ENCODE measurements at regions of chr14 and their contacts with region 1.

Region 1: GRCh38 chr14:24160850-24161804 is at the start of gene IRF9:
- DNase-seq: peak; percentile 97
- H3K4me3 ChIP-seq: peak within 1 kb of the TSS; percentile 37 to 79 (median 67)
- H3K27ac ChIP-seq: peak within 1 kb of the TSS; percentile 78
- H3K4me1 ChIP-seq: peaks cover 16% of the 10 kb centered on the region
- H3K27me3 ChIP-seq: no peaks in the 10 kb centered on the region
- CTCF ChIP-seq: peak; percentile 95 to 97
- POLR2A ChIP-seq: peak; percentile 88
- total RNA-seq, gene IRF9: 33.2 and 46.1 TPM in 2 replicates

Region 2: GRCh38 chr14:24013654-24014514 is 147.2 kb before region 1 on chr14:
- CTCF ChIA-PET with region 1: no interaction called
- POLR2A ChIA-PET with region 1: no interaction called
- dilution Hi-C with region 1: no loop called
- intact Hi-C with region 1: loop called (anchors 2 kb)
- DNase-seq: peak; percentile 82
- H3K4me3 ChIP-seq: no peak overlapping the region
- H3K27ac ChIP-seq: no peak overlapping the region
- H3K4me1 ChIP-seq: peaks cover 3% of the 10 kb centered on the region
- H3K27me3 ChIP-seq: peaks cover 0 to 2% of the 10 kb centered on the region in 2 experiments
- CTCF ChIP-seq: peak; percentile 64 to 72
- POLR2A ChIP-seq: no peak

Region 3: DNA sequence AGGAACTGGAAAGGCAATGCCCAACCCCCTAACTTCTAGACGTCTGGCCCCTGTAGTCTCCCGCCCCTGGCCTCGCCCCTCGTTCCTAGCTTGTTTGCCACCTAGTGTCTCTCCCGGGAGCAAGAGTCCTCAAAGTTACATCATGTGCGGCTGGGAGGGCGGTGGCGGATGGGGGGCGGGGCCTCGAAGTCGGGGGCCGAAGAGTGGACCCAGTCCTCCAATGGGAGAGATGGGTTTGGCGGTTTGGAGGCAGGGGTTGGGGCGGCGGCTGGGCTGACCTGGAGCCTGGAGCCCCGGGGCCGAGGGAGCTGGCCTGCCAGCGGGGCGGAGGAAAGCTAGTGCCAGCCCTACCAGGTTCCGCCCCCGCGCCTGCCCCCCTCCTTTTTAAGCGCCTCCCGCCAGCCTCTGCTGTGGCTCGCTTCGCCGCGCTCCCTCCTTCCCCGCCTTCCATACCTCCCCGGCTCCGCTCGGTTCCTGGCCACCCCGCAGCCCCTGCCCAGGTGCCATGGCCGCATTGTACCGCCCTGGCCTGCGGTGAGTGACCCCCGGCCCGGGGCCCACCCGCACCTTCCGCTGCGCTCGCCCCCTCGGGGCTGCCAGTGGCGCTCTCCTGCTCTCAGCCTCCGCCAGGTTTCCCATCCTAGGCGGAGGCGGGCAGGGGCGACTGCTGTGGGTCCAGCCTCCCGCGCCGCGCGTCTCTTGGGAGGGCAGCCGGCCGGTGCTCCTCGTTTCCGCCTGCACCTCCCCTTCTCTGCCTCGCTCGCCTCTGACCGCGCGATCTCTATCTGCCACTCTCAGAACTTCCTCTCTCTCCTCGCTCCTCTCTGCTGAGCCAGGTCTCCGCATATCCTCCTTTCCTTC is 67.0 kb before region 1 on chr14 and contains the start of gene PCK2:
- CTCF ChIA-PET with region 1: interaction called, 5 read pairs
- POLR2A ChIA-PET with region 1: no interaction called
- dilution Hi-C with region 1: no loop called
- intact Hi-C with region 1: loop called (anchors 1 kb)
- DNase-seq: peak; percentile 72
- H3K4me3 ChIP-seq: peak within 1 kb of the TSS; percentile 71 to 82 (median 74)
- H3K27ac ChIP-seq: peak within 1 kb of the TSS; percentile 46
- H3K4me1 ChIP-seq: peaks cover 9% of the 10 kb centered on the region
- H3K27me3 ChIP-seq: no peaks in the 10 kb centered on the region
- CTCF ChIP-seq: peak in 1 of 2 donors; percentile 9
- POLR2A ChIP-seq: peak; percentile 77
- total RNA-seq, gene PCK2: 24.5 and 25.1 TPM in 2 replicates

Region 4: GRCh38 chr14:24135834-24136542 is 25.1 kb before region 1 on chr14 and contains the start of gene PSME1:
- CTCF ChIA-PET with region 1: interaction called, 15 read pairs
- POLR2A ChIA-PET with region 1: interaction called, 3 read pairs
- dilution Hi-C with region 1: no loop called
- intact Hi-C with region 1: loop called (anchors 1 kb)
- DNase-seq: peak; percentile 92
- H3K4me3 ChIP-seq: peak within 1 kb of the TSS; percentile 56 to 93 (median 90)
- H3K27ac ChIP-seq: peak within 1 kb of the TSS; percentile 54
- H3K4me1 ChIP-seq: peaks cover 15% of the 10 kb centered on the region
- H3K27me3 ChIP-seq: no peaks in the 10 kb centered on the region
- CTCF ChIP-seq: no peak
- POLR2A ChIP-seq: peak; percentile 78
- total RNA-seq, gene PSME1: 120 and 135 TPM in 2 replicates

Region 5: DNA sequence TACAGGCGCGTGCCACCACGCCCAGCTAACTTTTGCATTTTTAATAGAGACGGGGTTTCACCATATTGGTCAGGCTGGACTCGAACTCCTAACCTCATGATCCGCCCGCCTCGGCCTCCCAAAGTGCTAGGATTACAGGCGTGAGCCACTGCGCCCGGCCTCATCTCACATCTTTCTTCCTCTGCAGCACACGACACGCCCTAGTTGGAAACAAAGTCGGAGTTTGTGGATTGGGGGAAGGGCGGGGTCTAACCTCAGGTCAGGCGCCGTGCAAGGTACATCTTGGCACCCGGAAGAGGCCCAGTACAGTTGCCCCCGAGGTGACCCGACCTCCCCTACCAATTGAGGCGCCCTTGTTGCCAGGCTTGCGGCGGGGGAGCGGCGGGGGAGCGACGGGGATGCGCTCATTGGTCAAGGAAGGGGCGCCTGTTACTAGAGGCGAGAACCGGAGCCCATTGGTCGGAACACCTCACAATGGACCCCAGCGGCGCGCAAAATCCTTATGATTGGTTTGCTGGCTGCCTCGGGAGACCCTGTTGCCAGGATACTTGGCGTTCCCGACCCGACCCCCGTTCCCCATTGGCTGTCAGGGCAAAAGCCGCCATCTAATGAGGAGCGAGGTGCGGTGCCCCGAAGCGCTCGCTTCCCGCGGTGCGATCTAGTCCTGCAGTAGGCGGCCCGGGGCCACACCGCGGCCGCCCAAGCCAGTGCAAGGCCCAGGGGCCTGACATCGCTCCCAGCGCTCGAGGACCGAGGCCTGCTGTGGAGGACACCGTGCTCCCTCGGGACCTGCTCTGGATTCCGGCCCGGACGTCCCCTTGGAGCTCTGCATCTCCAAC is 10.5 kb after region 1 on chr14 and contains the start of gene REC8:
- CTCF ChIA-PET with region 1: interaction called, 10 read pairs
- POLR2A ChIA-PET with region 1: no interaction called
- dilution Hi-C with region 1: no loop called
- intact Hi-C with region 1: no loop called
- DNase-seq: peak; percentile 82
- H3K4me3 ChIP-seq: peak within 1 kb of the TSS; percentile 8 to 25 (median 21)
- H3K27ac ChIP-seq: no peak within 1 kb of the TSS
- H3K4me1 ChIP-seq: peaks cover 3% of the 10 kb centered on the region
- H3K27me3 ChIP-seq: no peaks in the 10 kb centered on the region
- CTCF ChIP-seq: no peak
- POLR2A ChIP-seq: no peak
- total RNA-seq, gene REC8: 29.6 and 33.6 TPM in 2 replicates

Region 6: DNA sequence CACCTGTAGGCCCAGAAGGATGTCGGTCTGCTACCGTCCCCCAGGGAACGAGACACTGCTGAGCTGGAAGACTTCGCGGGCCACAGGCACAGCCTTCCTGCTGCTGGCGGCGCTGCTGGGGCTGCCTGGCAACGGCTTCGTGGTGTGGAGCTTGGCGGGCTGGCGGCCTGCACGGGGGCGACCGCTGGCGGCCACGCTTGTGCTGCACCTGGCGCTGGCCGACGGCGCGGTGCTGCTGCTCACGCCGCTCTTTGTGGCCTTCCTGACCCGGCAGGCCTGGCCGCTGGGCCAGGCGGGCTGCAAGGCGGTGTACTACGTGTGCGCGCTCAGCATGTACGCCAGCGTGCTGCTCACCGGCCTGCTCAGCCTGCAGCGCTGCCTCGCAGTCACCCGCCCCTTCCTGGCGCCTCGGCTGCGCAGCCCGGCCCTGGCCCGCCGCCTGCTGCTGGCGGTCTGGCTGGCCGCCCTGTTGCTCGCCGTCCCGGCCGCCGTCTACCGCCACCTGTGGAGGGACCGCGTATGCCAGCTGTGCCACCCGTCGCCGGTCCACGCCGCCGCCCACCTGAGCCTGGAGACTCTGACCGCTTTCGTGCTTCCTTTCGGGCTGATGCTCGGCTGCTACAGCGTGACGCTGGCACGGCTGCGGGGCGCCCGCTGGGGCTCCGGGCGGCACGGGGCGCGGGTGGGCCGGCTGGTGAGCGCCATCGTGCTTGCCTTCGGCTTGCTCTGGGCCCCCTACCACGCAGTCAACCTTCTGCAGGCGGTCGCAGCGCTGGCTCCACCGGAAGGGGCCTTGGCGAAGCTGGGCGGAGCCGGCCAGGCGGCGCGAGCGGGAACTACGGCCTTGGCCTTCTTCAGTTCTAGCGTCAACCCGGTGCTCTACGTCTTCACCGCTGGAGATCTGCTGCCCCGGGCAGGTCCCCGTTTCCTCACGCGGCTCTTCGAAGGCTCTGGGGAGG is 149.8 kb after region 1 on chr14 and contains the start of gene LTB4R:
- CTCF ChIA-PET with region 1: interaction called, 13 read pairs
- POLR2A ChIA-PET with region 1: no interaction called
- dilution Hi-C with region 1: no loop called
- intact Hi-C with region 1: no loop called
- DNase-seq: peak; percentile 88
- H3K4me3 ChIP-seq: peak within 1 kb of the TSS in 1 of 3 experiments; percentile 19
- H3K27ac ChIP-seq: peak within 1 kb of the TSS; percentile 91
- H3K4me1 ChIP-seq: peaks cover 60% of the 10 kb centered on the region
- H3K27me3 ChIP-seq: no peaks in the 10 kb centered on the region
- CTCF ChIP-seq: peak; percentile 20 to 53
- POLR2A ChIP-seq: peak; percentile 34
- total RNA-seq, gene LTB4R: 6.2 and 10.5 TPM in 2 replicates